Activated CD4-positive, alpha-beta T cell treated with anti-CD3 and anti-CD28 coated beads, Interleukin-2, amount 10 ng/mL, durations not matched to agents 24 days and 14 days (primary cell): ENCODE measurements at regions of chr2 and their contacts with region 1.

Region 1: DNA sequence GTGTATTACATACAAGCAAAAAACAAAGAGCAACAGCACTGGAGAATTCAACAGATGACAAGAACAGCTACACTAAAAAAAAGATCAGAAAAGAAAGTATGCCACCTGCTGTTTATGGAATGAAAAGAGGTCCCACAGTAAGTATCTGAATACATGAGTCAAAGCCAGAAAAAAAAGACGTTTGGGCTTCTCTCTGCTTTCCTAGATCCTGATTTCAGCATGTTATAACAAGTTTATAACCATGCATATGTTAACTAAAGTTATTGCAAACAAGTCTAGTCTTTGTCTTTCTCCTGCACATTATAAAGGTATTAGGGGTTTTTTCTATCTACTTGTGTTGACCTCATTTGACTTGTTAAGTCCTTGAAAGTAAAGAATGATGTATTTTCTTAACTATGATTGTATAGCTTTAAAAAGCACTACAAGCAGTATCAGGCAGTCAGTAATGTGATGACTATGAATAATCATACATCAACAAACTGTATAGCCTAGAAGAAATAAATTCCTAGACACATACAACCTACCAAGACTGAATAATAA is 108.5 kb upstream of the COL5A2 start:
- DNase-seq: no peak
- H3K4me3 Mint-ChIP-seq: no peak overlapping the region
- H3K27ac Mint-ChIP-seq: peak overlapping the region; percentile 30
- H3K4me1 Mint-ChIP-seq: peaks cover 20% of the 10 kb centered on the region
- H3K27me3 Mint-ChIP-seq: no peaks in the 10 kb centered on the region

Region 2: DNA sequence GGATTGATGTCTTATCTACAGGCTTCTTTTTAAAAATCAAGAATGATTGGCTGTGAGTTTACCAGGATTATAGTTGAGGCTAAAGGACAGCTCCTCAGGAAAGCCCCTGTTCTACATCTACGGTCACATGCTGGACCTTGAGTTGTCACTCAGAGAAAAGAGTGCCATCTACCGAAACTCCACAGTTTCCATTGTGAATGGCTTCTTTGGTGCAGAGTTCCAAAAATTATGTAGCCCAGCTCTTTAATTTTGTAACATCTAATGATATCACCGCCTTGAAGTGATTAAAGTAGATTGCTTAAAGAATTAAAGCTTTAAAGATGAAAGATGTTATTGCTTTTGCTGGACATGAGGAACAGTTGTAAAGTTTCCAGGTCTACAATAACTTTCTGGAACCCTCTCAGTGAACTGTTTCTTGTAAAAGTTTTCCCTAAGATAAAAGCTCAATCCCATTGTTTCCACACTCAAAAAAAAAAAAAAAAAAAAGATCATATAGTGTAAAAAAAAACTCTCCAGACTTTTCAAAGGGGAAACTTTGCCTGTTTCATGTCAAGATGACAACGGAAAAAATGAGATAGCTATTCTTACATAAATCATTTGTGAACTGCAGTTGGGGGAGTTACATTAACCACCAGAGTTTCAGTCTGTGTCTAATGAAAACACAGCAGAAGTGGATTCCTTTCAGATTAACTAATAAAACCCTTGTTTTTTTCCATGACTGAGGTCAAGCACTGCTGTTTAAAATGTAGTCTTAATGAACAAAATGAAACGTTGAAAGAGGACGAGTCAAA is 309.6 kb before region 1 on chr2:
- intact Hi-C with region 1: loop called (anchors 5 kb)
- DNase-seq: no peak
- H3K4me3 Mint-ChIP-seq: peak overlapping the region; percentile 25
- H3K27ac Mint-ChIP-seq: peak overlapping the region; percentile 85
- H3K4me1 Mint-ChIP-seq: peaks cover 9% of the 10 kb centered on the region
- H3K27me3 Mint-ChIP-seq: peaks cover 4% of the 10 kb centered on the region

Region 3: GRCh38 chr2:189142893-189143759 is 144.9 kb before region 1 on chr2:
- intact Hi-C with region 1: loop called (anchors 1 kb)
- DNase-seq: peak; percentile 83
- H3K4me3 Mint-ChIP-seq: no peak overlapping the region
- H3K27ac Mint-ChIP-seq: no peak overlapping the region
- H3K4me1 Mint-ChIP-seq: no peaks in the 10 kb centered on the region
- H3K27me3 Mint-ChIP-seq: no peaks in the 10 kb centered on the region

Region 4: DNA sequence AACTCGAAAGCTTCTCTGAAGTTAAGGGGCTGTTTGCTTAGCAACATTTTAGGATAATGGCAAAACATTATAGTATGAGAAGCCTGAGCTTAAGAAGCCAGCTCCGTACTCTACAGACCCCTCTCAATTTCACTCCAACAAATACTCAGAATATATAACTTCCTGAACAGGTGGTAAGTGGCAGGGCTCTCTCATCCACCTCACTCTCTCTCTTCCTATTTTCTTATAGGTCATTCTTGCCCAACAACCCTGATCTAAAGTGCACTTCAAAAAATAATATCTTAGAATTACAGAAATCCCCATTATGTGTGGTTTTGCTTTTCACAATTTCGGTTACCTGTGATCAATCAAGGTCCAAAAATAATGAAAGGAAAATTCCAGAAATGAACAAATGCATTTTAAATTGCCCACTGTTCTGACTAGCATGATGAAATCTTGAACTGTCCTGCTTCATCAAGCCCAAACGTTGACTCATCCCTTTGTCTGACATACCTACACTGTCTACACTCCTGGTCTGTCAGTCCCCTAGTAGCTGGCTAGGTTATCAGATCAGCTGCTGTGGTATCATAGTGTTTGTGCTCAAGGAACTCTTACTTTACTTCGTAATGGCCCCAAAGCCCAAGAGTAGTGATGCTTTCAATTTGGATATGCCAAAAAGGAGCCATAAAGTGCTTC is 14.4 kb after region 1 on chr2:
- intact Hi-C with region 1: loop called (anchors 2 kb)
- DNase-seq: no peak
- H3K4me3 Mint-ChIP-seq: peak overlapping the region; percentile 34
- H3K27ac Mint-ChIP-seq: peak overlapping the region; percentile 71
- H3K4me1 Mint-ChIP-seq: peaks cover 51% of the 10 kb centered on the region
- H3K27me3 Mint-ChIP-seq: no peaks in the 10 kb centered on the region

Region 5: DNA sequence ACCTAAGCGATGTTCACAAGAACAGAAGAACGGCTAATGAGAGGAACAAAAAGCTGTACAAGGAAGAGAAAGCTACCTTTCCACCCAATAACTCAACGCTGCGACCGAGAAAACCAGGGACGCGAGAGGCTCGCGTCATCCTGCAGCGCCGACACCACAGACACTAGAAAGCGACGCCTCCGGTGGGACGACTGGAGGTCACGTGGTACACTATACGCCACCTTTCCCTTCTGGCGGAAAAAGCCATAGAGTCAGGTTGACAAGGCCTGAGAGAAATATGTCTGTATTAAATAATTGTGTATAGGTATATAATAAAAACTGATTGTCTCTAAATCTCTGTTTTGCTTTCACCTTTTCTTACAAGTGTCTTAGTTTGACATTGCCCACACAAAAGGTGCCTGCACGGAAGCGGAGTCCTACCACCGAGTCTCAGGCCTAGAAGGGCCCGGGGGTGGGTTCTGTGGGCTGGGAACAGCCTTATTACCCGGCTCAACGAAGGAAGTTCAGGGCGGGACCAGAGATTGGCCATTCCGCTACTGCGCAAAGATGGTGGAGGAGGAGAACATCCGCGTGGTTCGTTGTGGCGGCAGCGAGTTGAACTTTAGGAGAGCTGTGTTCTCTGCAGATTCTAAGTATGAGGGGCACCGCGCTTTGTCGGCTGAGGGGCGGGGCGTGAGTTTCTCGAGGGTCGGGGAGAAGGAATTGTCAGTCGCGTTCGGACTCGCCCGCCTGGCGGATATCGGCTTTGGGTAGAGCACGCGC is 153.1 kb after region 1 on chr2 and contains the start of gene WDR75:
- intact Hi-C with region 1: loop called (anchors 2 kb)
- DNase-seq: peak; percentile 98
- H3K4me3 Mint-ChIP-seq: no peak within 1 kb of the TSS
- H3K27ac Mint-ChIP-seq: peak within 1 kb of the TSS; percentile 99
- H3K4me1 Mint-ChIP-seq: peaks cover 13% of the 10 kb centered on the region
- H3K27me3 Mint-ChIP-seq: peaks cover 7% of the 10 kb centered on the region
- total RNA-seq, gene WDR75: 117 and 121 TPM in 2 replicates